GM10248 (cell line): ENCODE measurements at regions of chr1 and their contacts with region 1.

Region 1: DNA sequence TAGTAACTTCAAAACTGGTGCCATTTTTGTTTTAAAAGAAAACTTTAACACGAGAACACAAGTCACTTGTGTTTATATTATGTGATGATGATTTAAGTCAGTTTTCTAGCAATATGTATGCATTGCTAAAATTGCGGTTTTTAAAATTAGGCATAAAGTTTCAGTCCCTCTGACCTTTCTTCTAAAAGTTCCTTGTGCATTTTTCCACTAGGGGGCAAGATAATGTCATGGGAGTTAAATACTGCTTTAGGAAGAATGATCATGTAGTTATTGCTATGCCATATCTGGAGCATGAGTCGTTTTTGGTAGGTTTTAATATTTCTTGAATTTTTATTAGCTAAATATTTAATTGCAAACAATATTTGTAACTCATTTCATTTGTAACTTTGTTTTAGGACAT is 10.7 kb downstream of the CDC7 start:
- DNase-seq: no peak
- CTCF ChIP-seq: peak; percentile 40

Region 2: DNA sequence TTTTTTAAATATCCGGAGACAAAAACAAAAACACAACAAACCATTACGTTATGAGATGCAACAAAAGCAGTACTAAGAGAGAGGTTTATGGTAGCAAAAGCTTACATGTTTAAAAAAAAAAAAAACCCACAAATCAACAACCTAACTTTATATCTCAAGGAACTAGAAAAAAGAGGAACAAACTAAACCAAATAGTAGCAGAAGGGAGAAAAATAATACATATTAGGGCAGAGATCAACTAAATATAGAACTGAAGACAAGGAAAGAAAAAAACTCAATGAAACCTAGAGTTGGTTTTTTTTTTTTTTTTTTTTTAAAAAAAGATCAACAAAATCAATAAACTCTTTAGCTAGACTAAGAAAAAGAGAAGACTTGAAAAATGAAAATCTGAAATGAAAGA is 524.4 kb before region 1 on chr1:
- CTCF ChIA-PET with region 1: no interaction called
- POLR2A ChIA-PET with region 1: no interaction called
- DNase-seq: no peak
- CTCF ChIP-seq: no peak

Region 3: DNA sequence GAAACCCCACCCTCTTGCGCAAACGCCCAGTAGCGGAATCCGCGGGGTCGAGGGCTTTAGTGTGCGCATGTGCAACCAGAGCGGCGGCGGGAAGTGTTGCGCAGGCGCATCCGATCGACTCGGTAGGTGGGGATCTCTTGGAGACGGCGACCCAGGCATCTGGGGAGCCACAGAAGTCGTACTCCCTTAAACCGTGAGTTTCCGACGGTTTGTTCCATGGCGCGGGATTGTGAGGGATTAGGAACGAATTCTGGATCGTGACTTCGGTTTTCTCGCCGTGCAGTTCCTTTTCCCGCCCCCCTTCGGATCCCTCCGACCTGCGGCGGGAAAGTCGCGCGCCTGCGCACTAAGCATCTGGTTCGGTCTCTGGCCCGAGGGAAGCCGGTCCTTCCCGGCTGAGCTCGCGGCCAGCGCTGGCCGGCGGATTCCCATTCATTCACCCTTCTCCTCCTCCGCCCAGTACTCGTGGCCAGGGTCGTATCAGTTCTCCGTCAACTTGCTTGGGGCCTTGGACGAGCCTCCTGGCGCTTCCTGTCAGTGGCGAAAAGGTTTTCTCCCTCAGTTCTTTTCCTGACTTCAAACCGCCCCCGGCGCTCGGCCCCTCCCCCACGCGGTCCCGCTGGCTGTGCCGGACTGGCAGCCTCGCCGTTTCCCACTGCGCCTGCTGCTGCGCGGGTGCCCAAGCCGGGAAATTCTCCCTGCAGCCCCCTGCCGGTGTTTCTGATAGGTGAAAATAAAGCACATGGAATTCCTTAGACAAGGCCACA is 10.4 kb before region 1 on chr1 and contains the start of gene CDC7:
- CTCF ChIA-PET with region 1: interaction called, 26 read pairs
- POLR2A ChIA-PET with region 1: no interaction called
- DNase-seq: peak; percentile 93
- CTCF ChIP-seq: no peak

Region 4: GRCh38 chr1:91523482-91523881 is 12.1 kb after region 1 on chr1:
- CTCF ChIA-PET with region 1: interaction called, 27 read pairs
- POLR2A ChIA-PET with region 1: no interaction called
- DNase-seq: no peak
- CTCF ChIP-seq: no peak

Region 5: GRCh38 chr1:91885716-91886506 is 374.5 kb after region 1 on chr1 and contains the start of gene TGFBR3:
- CTCF ChIA-PET with region 1: interaction called, 21 read pairs
- POLR2A ChIA-PET with region 1: no interaction called
- DNase-seq: peak; percentile 84
- CTCF ChIP-seq: peak; percentile 47

Region 6: DNA sequence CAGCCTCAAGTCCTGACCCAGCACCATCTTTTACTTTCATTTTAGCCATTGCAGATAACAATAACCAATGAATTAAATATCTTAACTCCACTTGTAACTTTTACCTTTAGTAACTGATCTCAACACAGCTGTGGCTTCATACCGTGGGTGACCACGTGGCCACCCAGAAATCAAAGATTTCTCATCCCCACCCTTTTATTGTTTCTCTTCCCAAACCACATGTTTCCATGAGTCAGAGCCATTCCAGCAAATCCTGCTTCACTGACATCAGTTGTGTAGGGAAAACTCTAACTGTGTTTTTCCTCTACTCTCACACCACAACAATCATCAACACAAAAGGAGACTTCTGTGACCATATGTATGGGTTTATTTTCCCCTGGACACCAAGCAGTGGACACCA is 412.8 kb after region 1 on chr1:
- CTCF ChIA-PET with region 1: interaction called, 21 read pairs
- POLR2A ChIA-PET with region 1: no interaction called
- DNase-seq: no peak
- CTCF ChIP-seq: no peak

Region 7: DNA sequence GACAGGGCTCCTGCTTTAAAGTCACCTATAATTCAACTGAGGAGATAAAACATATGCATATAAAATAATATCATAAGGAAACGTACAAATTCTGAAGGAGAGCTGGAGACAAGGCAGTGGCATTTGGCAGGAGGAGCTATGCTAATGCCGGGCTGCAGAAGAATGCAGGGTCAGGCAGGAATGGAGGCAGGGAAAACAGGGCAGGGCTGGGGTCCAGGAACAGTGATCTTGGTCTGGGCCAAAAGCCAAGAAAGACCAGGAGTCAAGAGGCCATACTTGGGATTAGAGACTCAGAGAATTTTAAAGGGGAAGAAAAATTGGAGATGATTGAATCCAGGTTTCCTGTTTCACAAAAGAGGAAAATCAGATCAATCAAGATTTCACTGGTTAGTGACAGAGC is 417.9 kb after region 1 on chr1:
- CTCF ChIA-PET with region 1: interaction called, 21 read pairs
- POLR2A ChIA-PET with region 1: no interaction called
- DNase-seq: no peak
- CTCF ChIP-seq: no peak